ENCODE measurements at regions of chr9 and their contacts with region 1.

Region 1: GRCh38 chr9:22052376-22052945 is 43.4 kb upstream of the CDKN2B start:
- DNase-seq: no peak
- H3K4me3 ChIP-seq: no peak overlapping the region
- H3K27ac ChIP-seq: peak overlapping the region; percentile 9 to 86; a peak in 3 of 4 replicates
- H3K4me1 ChIP-seq: 0 out of 4 replicates have a peak, but pooled peaks cover 0 to 6% of the 10 kb centered on the region in 2 experiments
- H3K27me3 ChIP-seq: no peaks in the 10 kb centered on the region
- CTCF ChIP-seq: no peak
- EP300 ChIP-seq: peak in 1 of 2 experiments; percentile 72; a peak in 2 of 4 replicates
- RAD21 ChIP-seq: no peak

Region 2: DNA sequence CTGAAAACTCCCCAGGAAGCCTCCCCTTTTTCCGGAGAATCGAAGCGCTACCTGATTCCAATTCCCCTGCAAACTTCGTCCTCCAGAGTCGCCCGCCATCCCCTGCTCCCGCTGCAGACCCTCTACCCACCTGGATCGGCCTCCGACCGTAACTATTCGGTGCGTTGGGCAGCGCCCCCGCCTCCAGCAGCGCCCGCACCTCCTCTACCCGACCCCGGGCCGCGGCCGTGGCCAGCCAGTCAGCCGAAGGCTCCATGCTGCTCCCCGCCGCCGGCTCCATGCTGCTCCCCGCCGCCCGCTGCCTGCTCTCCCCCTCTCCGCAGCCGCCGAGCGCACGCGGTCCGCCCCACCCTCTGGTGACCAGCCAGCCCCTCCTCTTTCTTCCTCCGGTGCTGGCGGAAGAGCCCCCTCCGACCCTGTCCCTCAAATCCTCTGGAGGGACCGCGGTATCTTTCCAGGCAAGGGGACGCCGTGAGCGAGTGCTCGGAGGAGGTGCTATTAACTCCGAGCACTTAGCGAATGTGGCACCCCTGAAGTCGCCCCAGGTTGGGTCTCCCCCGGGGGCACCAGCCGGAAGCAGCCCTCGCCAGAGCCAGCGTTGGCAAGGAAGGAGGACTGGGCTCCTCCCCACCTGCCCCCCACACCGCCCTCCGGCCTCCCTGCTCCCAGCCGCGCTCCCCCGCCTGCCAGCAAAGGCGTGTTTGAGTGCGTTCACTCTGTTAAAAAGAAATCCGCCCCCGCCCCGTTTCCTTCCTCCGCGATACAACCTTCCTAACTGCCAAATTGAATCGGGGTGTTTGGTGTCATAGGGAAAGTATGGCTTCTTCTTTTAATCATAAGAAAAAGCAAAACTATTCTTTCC is 77.7 kb before region 1 on chr9:
- CTCF ChIA-PET with region 1: no interaction called
- POLR2A ChIA-PET with region 1: no interaction called
- DNase-seq: peak; percentile 79
- H3K4me3 ChIP-seq: peak overlapping the region; percentile 53 to 65
- H3K27ac ChIP-seq: no peak overlapping the region
- H3K4me1 ChIP-seq: peaks cover 0 to 4% of the 10 kb centered on the region in 2 experiments; a peak in 1 of 4 replicates
- H3K27me3 ChIP-seq: peaks cover 86% of the 10 kb centered on the region
- CTCF ChIP-seq: no peak
- EP300 ChIP-seq: no peak
- RAD21 ChIP-seq: no peak

Region 3: GRCh38 chr9:22037954-22038690 is 14.3 kb before region 1 on chr9:
- CTCF ChIA-PET with region 1: interaction called, 23 read pairs
- POLR2A ChIA-PET with region 1: no interaction called
- DNase-seq: peak; percentile 4
- H3K4me3 ChIP-seq: no peak overlapping the region
- H3K27ac ChIP-seq: no peak overlapping the region
- H3K4me1 ChIP-seq: no peaks in the 10 kb centered on the region; a peak in 1 of 4 replicates
- H3K27me3 ChIP-seq: no peaks in the 10 kb centered on the region
- CTCF ChIP-seq: peak; percentile 57
- EP300 ChIP-seq: no peak
- RAD21 ChIP-seq: peak; percentile 73

Region 4: DNA sequence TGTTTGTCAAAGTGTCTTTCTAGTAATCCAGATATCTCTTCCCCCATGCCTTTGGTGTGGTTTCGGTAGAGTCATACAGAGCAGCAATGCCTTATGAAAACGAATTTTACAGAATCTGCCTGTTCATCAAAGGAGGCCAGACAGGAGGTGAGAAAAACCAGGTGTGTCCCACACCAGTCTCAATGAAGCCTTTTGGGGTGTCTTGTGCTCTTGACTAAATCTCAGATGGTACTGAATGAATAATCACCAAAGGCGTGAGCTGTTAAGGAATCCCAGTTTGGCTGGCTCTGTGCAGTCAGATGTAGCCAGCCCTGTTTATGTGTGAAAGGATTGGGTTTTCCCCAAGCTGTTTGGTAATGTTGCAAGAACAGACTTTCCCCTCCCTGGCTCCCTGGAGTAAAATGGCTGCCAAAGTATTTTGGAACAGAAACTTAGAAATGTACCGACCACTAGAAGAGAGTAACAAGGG is 27.4 kb after region 1 on chr9:
- CTCF ChIA-PET with region 1: no interaction called
- POLR2A ChIA-PET with region 1: no interaction called
- DNase-seq: no peak
- H3K4me3 ChIP-seq: no peak overlapping the region
- H3K27ac ChIP-seq: no peak overlapping the region
- H3K4me1 ChIP-seq: peaks cover 0 to 4% of the 10 kb centered on the region in 2 experiments; a peak in 1 of 4 replicates
- H3K27me3 ChIP-seq: no peaks in the 10 kb centered on the region; the same call in 1 of the 2 replicates
- CTCF ChIP-seq: no peak
- EP300 ChIP-seq: no peak
- RAD21 ChIP-seq: no peak

Region 5: DNA sequence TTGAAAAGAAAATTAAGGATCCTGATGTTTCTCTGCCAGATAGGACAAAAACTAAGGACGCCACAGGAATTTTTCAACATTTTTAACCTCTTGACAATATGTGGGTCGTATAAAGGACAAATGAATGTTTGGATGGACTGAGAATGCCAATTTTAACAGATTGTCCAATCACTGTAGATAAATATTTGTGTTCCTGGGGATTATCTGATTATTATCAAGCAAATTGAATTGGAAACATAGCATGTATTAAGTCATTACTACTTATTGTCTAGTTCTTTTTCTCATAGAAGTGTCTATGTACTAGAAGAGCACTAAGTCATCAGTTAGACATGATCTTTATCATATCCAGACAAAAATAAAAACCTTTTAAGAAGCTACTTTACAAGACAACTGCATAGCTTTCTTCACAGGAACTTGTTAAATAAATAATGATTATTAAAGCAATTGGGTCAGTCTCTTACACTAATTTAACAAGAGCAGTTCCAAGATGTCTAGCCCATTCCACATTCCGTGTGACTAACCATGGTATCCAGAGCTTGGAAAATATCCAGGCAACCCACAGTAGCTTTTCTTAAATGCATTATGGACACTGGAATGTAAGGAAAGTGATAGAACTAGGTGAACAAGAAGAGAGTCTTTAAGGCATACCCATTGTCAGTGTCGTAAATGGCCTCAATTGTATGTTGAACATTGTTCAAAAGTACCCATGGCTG is 84.1 kb after region 1 on chr9:
- CTCF ChIA-PET with region 1: no interaction called
- POLR2A ChIA-PET with region 1: no interaction called
- DNase-seq: no peak
- H3K4me3 ChIP-seq: no peak overlapping the region
- H3K27ac ChIP-seq: peak overlapping the region; percentile 3 to 37; a peak in 3 of 4 replicates
- H3K4me1 ChIP-seq: no peaks in the 10 kb centered on the region; a peak in 1 of 4 replicates
- H3K27me3 ChIP-seq: peaks cover 12% of the 10 kb centered on the region; the same call in 1 of the 2 replicates
- CTCF ChIP-seq: no peak
- EP300 ChIP-seq: peak; percentile 36 to 42; a peak in 2 of 4 replicates
- RAD21 ChIP-seq: no peak

Region 6: GRCh38 chr9:22274477-22274876 is 222.0 kb after region 1 on chr9:
- CTCF ChIA-PET with region 1: no interaction called
- POLR2A ChIA-PET with region 1: no interaction called
- DNase-seq: no peak
- H3K4me3 ChIP-seq: no peak overlapping the region
- H3K27ac ChIP-seq: no peak overlapping the region
- H3K4me1 ChIP-seq: no peaks in the 10 kb centered on the region
- H3K27me3 ChIP-seq: no peaks in the 10 kb centered on the region
- CTCF ChIP-seq: no peak
- EP300 ChIP-seq: no peak
- RAD21 ChIP-seq: no peak

Measured in SK-N-SH (cell line).